H1 (cell line): ENCODE measurements at regions of chr20 and their contacts with region 1.

Region 1: GRCh38 chr20:4135385-4136077 is 120.2 kb upstream of the RNF24 start:
- DNase-seq: peak in 1 of 2 experiments; percentile 39
- H3K4me3 ChIP-seq: no peak overlapping the region
- H3K27ac ChIP-seq: no peak overlapping the region
- H3K4me1 ChIP-seq: peaks cover 0 to 10% (median 4%) of the 10 kb centered on the region in 4 experiments; a peak in 6 of 7 replicates
- H3K27me3 ChIP-seq: no peaks in the 10 kb centered on the region
- CTCF ChIP-seq: no peak
- EP300 ChIP-seq: no peak
- POLR2A ChIP-seq: no peak
- RAD21 ChIP-seq: no peak

Region 2: GRCh38 chr20:4119854-4120209 is 15.7 kb before region 1 on chr20:
- CTCF ChIA-PET with region 1: interaction called, 12 read pairs
- POLR2A ChIA-PET with region 1: no interaction called
- DNase-seq: no peak
- H3K4me3 ChIP-seq: no peak overlapping the region
- H3K27ac ChIP-seq: no peak overlapping the region
- H3K4me1 ChIP-seq: no peaks in the 10 kb centered on the region
- H3K27me3 ChIP-seq: no peaks in the 10 kb centered on the region
- CTCF ChIP-seq: no peak
- EP300 ChIP-seq: no peak
- POLR2A ChIP-seq: no peak
- RAD21 ChIP-seq: no peak

Region 3: DNA sequence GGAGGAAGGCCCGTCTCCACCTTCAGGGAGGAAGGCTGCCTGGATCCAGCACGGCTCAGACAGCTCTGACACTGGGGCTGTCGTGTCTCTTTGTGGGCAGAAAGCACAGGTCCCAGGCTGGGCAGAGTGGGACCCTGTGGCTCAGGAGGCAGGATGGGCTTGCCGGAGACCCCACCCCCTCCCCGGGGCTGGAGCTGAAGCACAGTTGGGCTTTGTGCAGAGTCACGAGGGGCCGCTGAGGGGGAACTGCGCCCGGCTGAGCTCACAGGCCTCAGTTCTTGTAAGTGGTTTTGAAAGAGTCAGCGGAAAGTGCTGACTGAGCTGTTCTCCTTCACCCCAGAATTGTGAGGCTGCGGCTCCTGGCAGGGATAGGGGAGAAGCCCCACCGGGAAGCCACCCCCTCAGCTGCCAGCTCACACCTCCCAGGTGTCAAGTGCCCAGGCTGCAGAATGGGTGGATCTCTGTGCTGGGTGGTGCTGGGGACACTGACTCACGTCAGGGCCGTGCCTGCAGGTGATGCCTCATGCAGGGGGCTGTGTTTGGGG is 25.3 kb after region 1 on chr20:
- CTCF ChIA-PET with region 1: no interaction called
- POLR2A ChIA-PET with region 1: no interaction called
- DNase-seq: peak in 1 of 2 experiments; percentile 50
- H3K4me3 ChIP-seq: no peak overlapping the region
- H3K27ac ChIP-seq: no peak overlapping the region
- H3K4me1 ChIP-seq: peaks cover 0 to 27% (median 17%) of the 10 kb centered on the region in 4 experiments; a peak in 6 of 7 replicates
- H3K27me3 ChIP-seq: no peaks in the 10 kb centered on the region
- CTCF ChIP-seq: no peak
- EP300 ChIP-seq: no peak
- POLR2A ChIP-seq: no peak
- RAD21 ChIP-seq: no peak

Region 4: GRCh38 chr20:4244700-4245485 is 109.4 kb after region 1 on chr20:
- CTCF ChIA-PET with region 1: no interaction called
- POLR2A ChIA-PET with region 1: no interaction called
- DNase-seq: no peak
- H3K4me3 ChIP-seq: no peak overlapping the region
- H3K27ac ChIP-seq: no peak overlapping the region
- H3K4me1 ChIP-seq: peaks cover 0 to 12% (median 4%) of the 10 kb centered on the region in 4 experiments; a peak in 5 of 7 replicates
- H3K27me3 ChIP-seq: peaks cover 14 to 53% (median 42%) of the 10 kb centered on the region in 4 experiments
- CTCF ChIP-seq: no peak
- EP300 ChIP-seq: no peak
- POLR2A ChIP-seq: no peak
- RAD21 ChIP-seq: no peak